Activated CD4-positive, alpha-beta memory T cell treated with anti-CD3 and anti-CD28 coated beads for 36 hours (primary cell): ENCODE measurements at regions of chr1 and their contacts with region 1.

Region 1: GRCh38 chr1:155091071-155091709 is 12.6 kb downstream of the EFNA3 start:
- DNase-seq: peak; percentile 87
- H3K4me3 Mint-ChIP-seq: no peak overlapping the region
- H3K27ac Mint-ChIP-seq: no peak overlapping the region
- H3K4me1 Mint-ChIP-seq: peaks cover 3% of the 10 kb centered on the region
- H3K27me3 Mint-ChIP-seq: peaks cover 8% of the 10 kb centered on the region

Region 2: DNA sequence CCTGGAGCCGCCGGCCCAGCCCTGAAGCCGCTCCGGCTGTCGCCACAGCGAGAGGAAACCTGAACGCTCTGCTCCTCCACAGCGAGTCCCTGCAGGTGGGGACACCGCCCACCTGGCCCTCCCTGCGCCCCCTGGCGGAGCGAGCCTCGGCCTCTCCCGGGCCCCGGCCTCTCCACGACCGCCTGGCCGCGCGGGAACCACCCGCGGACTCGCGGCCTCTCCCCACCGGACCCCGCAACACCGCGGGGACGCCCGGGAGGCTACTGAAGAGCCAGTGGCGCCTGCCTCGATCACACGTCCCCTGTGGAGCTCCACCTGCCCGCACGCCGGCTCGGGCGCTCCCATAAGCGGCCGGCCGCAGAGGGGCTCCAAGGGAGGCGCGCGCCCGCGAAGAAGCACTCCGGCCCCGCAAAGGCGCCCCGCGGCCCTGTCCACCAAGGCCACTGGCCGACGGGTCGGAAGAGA is 330.7 kb before region 1 on chr1:
- CTCF ChIA-PET with region 1: no interaction called
- POLR2A ChIA-PET with region 1: no interaction called
- intact Hi-C with region 1: no loop called
- DNase-seq: peak; percentile 86
- H3K4me3 Mint-ChIP-seq: peak overlapping the region; percentile 51
- H3K27ac Mint-ChIP-seq: peak overlapping the region; percentile 89
- H3K4me1 Mint-ChIP-seq: peaks cover 46% of the 10 kb centered on the region
- H3K27me3 Mint-ChIP-seq: peaks cover 2% of the 10 kb centered on the region

Region 3: DNA sequence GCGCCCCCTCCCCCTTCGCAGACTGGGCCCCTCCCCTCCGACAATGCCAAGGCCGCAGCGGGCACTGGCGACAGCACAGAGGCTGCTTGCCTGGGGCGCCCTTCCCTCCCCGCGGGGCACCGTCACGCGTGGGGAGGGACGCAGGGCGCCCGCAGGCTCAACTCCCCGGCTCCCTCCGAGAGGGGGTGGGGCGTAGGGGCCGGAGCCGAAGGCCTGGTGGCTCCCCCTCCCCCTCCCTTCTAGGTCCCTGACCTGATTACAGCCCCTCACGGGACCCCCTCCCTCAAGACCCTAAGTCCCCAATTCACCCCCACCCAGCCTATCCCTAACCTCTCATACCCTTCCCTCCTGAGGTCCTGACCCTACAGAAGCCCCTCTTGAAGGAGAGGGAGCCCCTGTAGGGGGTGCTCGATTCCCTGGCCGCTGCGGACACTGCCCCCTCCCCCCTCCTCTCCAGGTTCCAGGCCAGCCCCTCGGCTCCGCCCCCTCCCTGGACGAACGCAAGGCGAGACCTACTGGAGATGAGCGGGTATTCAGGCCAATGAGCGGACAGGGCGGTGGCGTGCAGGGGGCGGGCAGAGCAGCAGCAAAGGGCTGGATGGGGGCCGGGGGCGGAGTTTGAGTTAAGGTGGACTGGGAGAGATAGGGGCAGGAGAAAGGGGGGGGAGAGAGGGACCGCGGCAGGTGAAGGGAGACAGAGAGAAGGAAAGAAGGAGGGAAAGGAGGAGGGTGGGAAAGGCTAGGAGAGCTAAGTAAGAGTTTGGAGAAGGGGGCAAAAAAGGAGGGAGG is 89.3 kb before region 1 on chr1:
- CTCF ChIA-PET with region 1: no interaction called
- POLR2A ChIA-PET with region 1: no interaction called
- intact Hi-C with region 1: no loop called
- DNase-seq: peak; percentile 100
- H3K4me3 Mint-ChIP-seq: peak overlapping the region; percentile 94
- H3K27ac Mint-ChIP-seq: peak overlapping the region; percentile 95
- H3K4me1 Mint-ChIP-seq: peaks cover 50% of the 10 kb centered on the region
- H3K27me3 Mint-ChIP-seq: no peaks in the 10 kb centered on the region

Region 4: GRCh38 chr1:155034318-155035208 is 56.6 kb before region 1 on chr1:
- CTCF ChIA-PET with region 1: no interaction called
- POLR2A ChIA-PET with region 1: no interaction called
- intact Hi-C with region 1: no loop called
- DNase-seq: no peak
- H3K4me3 Mint-ChIP-seq: no peak overlapping the region
- H3K27ac Mint-ChIP-seq: no peak overlapping the region
- H3K4me1 Mint-ChIP-seq: no peaks in the 10 kb centered on the region
- H3K27me3 Mint-ChIP-seq: peaks cover 2% of the 10 kb centered on the region

Region 5: GRCh38 chr1:155063550-155064110 is 27.6 kb before region 1 on chr1 and contains the start of gene EFNA4:
- CTCF ChIA-PET with region 1: interaction called, 125 read pairs
- POLR2A ChIA-PET with region 1: no interaction called
- intact Hi-C with region 1: no loop called
- DNase-seq: peak; percentile 89
- H3K4me3 Mint-ChIP-seq: peak within 1 kb of the TSS; percentile 80
- H3K27ac Mint-ChIP-seq: peak within 1 kb of the TSS; percentile 31
- H3K4me1 Mint-ChIP-seq: peaks cover 29% of the 10 kb centered on the region
- H3K27me3 Mint-ChIP-seq: no peaks in the 10 kb centered on the region
- total RNA-seq, gene EFNA4: 5.0 to 6.1 TPM

Region 6: DNA sequence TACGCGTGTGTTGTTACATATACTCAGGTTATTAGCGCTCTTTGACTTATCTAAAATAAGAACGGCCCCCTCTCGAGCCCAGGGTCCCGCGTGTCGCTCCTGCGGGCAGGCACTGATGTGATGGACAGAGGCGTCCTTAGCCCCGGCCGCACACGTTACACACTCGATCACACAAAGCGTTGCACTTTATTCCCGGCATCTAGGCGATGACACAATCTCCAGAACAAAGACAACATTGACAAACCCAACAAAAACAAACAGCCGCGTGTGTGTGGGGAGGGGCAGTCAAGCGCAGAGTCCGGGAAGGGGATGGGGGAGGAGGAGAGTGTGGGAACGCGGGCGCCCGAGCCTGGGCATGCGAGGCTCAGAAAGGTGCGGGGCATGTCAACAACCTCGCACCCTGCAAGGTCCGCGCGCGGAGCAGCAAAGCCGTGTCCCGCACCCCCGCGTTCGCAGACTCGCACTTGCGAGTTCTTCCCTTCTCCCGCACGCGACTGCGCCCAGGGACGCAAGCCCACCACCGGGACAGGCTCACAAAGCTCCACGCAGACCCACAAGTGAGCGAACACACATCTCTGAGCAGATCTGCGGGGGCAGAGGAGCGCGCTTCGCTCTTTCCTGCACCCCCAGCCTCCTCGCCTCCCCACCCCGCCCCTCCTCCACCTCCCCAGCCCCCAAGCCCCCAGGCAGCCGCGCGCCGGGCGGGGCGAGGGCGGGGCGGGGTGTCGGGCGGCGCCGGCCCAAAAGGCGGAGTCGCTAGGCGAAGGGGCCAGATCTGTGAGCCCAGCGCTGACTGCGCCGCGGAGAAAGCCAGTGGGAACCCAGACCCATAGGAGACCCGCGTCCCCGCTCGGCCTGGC is 36.1 kb after region 1 on chr1 and contains the start of gene EFNA1:
- CTCF ChIA-PET with region 1: interaction called, 19 read pairs
- POLR2A ChIA-PET with region 1: no interaction called
- intact Hi-C with region 1: no loop called
- DNase-seq: peak; percentile 45
- H3K4me3 Mint-ChIP-seq: peak within 1 kb of the TSS; percentile 64
- H3K27ac Mint-ChIP-seq: no peak within 1 kb of the TSS
- H3K4me1 Mint-ChIP-seq: peaks cover 30% of the 10 kb centered on the region
- H3K27me3 Mint-ChIP-seq: peaks cover 25% of the 10 kb centered on the region
- total RNA-seq, gene EFNA1: 0.24 TPM in 1 of 2 experiments, not detected in the other

Region 7: GRCh38 chr1:155167166-155168104 is 76.2 kb after region 1 on chr1:
- CTCF ChIA-PET with region 1: interaction called, 274 read pairs
- POLR2A ChIA-PET with region 1: interaction called, 7 read pairs
- intact Hi-C with region 1: loop called (anchors 1 kb)
- DNase-seq: peak; percentile 92
- H3K4me3 Mint-ChIP-seq: peak overlapping the region; percentile 49
- H3K27ac Mint-ChIP-seq: no peak overlapping the region
- H3K4me1 Mint-ChIP-seq: peaks cover 19% of the 10 kb centered on the region
- H3K27me3 Mint-ChIP-seq: no peaks in the 10 kb centered on the region